ENCODE measurements at regions of chr17 and their contacts with region 1.

Region 1: GRCh38 chr17:76492989-76493501 is 8.2 kb downstream of the RHBDF2 start:
- DNase-seq: peak in 1 of 2 experiments; percentile 50
- H3K4me3 ChIP-seq: no peak overlapping the region
- H3K27ac ChIP-seq: no peak overlapping the region
- H3K4me1 ChIP-seq: no peaks in the 10 kb centered on the region
- H3K27me3 ChIP-seq: no peaks in the 10 kb centered on the region
- CTCF ChIP-seq: no peak

Region 2: DNA sequence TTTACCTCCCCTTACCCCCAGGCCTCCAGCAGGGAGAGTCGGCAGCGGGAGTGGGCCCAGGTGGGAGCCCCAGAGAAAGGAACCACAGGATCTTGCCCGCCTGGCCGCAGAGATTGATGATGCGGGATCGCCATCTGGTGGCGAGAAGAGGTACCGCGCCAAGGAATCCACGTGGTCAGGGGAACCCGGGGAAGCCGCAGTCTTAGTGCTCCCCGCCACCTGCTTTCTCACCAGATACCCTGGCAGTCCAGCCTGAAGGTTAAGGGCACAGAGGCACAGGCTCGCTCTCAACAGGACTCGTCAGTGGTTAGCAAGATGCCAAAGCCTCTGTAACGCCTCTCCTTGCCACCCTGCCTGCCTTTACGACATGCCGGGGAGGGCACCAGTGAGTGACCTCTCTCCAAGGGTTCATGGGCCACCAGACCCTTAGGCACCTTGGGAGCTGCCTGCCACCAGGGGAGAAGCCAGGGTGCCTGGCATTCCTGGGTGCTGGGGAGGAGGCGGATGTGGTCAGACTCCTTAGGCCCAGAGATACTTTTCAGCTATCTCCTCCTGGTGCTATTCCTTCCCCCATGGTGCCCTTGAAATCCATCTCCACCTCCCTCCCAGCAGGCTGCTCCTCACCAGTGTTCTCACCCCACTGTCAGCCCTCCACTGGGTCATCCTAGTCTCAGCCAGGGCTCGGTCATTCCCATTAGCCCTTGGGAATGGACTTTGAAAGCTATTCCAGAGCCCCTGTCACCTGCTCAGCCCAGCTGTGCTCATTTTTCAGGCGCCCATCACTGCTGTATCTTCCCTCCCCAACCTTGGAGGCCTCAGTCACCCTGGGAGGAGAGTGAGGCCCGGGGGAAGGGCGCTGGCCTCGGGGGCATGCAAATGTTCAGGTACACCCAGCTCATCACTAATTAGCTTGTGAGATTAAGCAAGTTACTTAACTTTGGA is 13.6 kb after region 1 on chr17:
- CTCF ChIA-PET with region 1: interaction called, 16 read pairs
- POLR2A ChIA-PET with region 1: no interaction called
- intact Hi-C with region 1: no loop called
- DNase-seq: peak; percentile 43 to 87
- H3K4me3 ChIP-seq: no peak overlapping the region
- H3K27ac ChIP-seq: no peak overlapping the region
- H3K4me1 ChIP-seq: no peaks in the 10 kb centered on the region
- H3K27me3 ChIP-seq: no peaks in the 10 kb centered on the region
- CTCF ChIP-seq: peak; percentile 86

Measured in PC-9 (cell line).